Gastrocnemius medialis (tissue), 4 donors: ENCODE measurements at regions of chr9 and their contacts with region 1.

Region 1: DNA sequence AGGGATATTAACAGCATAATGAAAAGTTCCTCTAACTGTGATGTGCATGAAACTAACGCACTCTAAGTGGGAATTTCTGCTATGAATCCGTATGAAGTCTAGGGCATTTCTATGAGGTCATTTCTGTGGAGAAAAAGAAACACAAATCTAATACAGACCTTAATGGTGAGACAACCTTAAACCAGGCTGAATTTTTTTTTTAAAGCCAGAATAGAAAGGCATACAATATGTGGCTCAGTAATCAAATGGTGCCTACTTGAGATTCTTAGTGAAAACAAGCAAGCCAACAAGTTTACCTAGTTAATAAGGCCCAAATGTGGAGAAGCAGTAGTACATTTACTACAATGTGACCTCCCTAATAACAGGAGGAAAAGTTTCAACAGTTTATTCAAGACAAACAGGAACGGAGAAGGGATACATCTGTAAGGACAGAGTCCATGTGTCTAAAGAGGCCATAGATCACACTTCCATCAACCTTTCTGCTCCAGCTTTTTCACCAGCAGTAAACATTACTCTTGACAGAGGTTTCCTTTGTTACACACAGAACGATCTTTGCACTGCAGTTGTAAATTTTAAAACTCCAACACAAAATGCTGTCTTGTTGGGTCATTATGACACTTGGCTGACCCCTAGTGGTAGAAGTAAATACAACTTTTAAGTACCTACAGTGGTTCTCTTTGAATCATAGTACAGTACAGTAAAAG is 26.2 kb downstream of the CARNMT1 start:
- DNase-seq: no peak
- ATAC-seq: peak; percentile 68 to 86
- H3K4me3 ChIP-seq: no peak overlapping the region
- H3K27ac ChIP-seq: no peak overlapping the region
- H3K4me1 ChIP-seq: no peaks in the 10 kb centered on the region
- H3K27me3 ChIP-seq: no peaks in the 10 kb centered on the region
- CTCF ChIP-seq: peak; percentile 66 to 79 (median 73)
- POLR2A ChIP-seq: no peak

Region 2: GRCh38 chr9:74696520-74696919 is 305.4 kb before region 1 on chr9:
- in situ Hi-C with region 1: no loop called
- intact Hi-C with region 1: no loop called
- DNase-seq: no peak
- ATAC-seq: no peak
- H3K4me3 ChIP-seq: no peak overlapping the region
- H3K27ac ChIP-seq: no peak overlapping the region
- H3K4me1 ChIP-seq: no peaks in the 10 kb centered on the region
- H3K27me3 ChIP-seq: no peaks in the 10 kb centered on the region
- CTCF ChIP-seq: no peak
- POLR2A ChIP-seq: no peak

Region 3: DNA sequence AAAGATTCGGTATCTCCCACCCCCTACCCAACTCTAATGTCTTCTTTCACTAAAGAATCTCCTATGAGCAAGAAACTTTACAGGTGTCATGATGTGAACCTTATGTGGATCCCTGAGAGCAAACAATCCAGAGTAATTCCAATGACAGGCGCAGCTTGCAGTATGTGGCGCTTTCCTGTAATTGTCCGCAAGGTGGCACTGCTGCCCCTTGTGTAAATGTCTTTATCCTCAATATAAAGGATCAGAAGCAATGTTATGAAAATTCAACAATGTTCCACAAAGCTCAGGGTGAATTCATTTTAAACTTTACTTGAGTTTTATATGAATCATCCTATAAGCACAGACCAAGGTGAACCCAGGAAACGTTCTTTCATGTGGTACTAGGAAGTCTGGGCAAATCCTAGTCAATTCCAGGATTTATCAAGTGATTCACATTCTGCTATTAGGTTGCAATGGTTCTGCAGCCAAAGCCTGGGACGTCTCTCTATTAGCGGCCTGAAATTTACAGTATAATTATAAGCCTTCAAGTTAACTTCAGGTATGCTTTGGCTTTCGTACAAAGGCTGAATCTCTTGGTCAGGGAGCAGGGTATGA is 227.9 kb before region 1 on chr9:
- in situ Hi-C with region 1: loop called (anchors 5 kb)
- intact Hi-C with region 1: loop called (anchors 1 kb)
- DNase-seq: peak; percentile 22 to 51
- ATAC-seq: peak in 1 of 2 donors; percentile 80
- H3K4me3 ChIP-seq: no peak overlapping the region
- H3K27ac ChIP-seq: no peak overlapping the region
- H3K4me1 ChIP-seq: no peaks in the 10 kb centered on the region
- H3K27me3 ChIP-seq: peaks cover 0 to 8% (median 0%) of the 10 kb centered on the region in 3 donors
- CTCF ChIP-seq: peak; percentile 47 to 89 (median 73)
- POLR2A ChIP-seq: no peak

Region 4: GRCh38 chr9:75023846-75024245 is 22.0 kb after region 1 on chr9:
- in situ Hi-C with region 1: no loop called
- intact Hi-C with region 1: no loop called
- DNase-seq: no peak
- ATAC-seq: no peak
- H3K4me3 ChIP-seq: no peak overlapping the region
- H3K27ac ChIP-seq: no peak overlapping the region
- H3K4me1 ChIP-seq: peaks cover 23 to 26% of the 10 kb centered on the region in 2 donors
- H3K27me3 ChIP-seq: no peaks in the 10 kb centered on the region
- CTCF ChIP-seq: no peak
- POLR2A ChIP-seq: no peak